GM10248 (cell line): ENCODE measurements at regions of chr2 and their contacts with region 1.

Region 1: GRCh38 chr2:190742431-190742830 is 93.5 kb downstream of the NAB1 start:
- DNase-seq: no peak
- CTCF ChIP-seq: no peak

Region 2: GRCh38 chr2:190726255-190726654 is 16.2 kb before region 1 on chr2:
- CTCF ChIA-PET with region 1: interaction called, 10 read pairs
- POLR2A ChIA-PET with region 1: no interaction called
- DNase-seq: no peak
- CTCF ChIP-seq: no peak